ENCODE measurements at regions of chr2 and their contacts with region 1.

Region 1: DNA sequence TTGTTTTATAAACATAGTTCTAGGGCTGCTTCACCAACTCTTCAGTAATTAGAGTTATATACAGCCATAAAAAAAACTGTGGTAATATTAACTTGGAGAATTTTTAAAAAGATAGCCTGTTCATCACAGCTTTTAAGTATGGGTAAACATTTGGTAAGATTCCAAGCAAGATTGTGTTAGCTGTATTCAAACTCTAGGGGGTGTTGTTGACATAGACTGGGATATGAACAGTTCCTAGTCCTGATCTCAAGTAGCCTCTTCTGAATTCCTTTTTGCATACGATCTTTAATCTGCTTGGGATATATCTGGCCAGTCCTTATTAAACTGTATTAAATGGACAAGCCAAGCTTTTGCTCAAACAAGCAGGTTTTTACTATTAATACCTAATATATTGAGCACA is 13.4 kb downstream of the NOP58 start:
- DNase-seq: no peak
- H3K4me3 ChIP-seq: no peak overlapping the region
- H3K27ac ChIP-seq: no peak overlapping the region
- H3K4me1 ChIP-seq: no peaks in the 10 kb centered on the region
- H3K27me3 ChIP-seq: no peaks in the 10 kb centered on the region
- CTCF ChIP-seq: peak in 2 of 3 experiments; percentile 7 to 64; a peak in 2 of 4 replicates
- EP300 ChIP-seq: no peak
- POLR2A ChIP-seq: no peak
- RAD21 ChIP-seq: peak; percentile 44 to 55

Region 2: DNA sequence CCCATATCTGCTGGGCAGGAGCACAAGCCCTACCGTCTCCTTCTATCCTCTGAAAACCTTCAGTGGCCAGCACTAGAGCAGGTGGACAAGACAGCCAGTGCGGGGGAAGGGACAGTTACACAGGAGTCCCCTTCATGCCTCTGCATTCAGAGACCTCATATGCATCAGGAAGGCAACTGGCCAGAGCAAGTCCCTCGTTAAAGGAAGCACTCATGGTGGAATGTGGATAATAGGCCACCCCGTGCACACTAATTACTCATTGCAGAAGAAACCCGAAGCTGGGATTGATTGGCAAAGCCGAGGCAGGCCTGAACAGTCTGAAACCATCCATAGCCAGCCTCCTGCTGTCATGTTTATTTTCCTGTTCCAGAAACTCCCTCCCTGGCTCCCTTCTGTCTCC is 194.7 kb before region 1 on chr2:
- CTCF ChIA-PET with region 1: no interaction called
- POLR2A ChIA-PET with region 1: no interaction called
- DNase-seq: no peak
- H3K4me3 ChIP-seq: no peak overlapping the region; a peak in 1 of 8 replicates
- H3K27ac ChIP-seq: no peak overlapping the region
- H3K4me1 ChIP-seq: peaks cover 5 to 9% (median 7%) of the 10 kb centered on the region in 4 experiments; a peak in 6 of 7 replicates
- H3K27me3 ChIP-seq: no peaks in the 10 kb centered on the region
- CTCF ChIP-seq: no peak
- EP300 ChIP-seq: no peak
- POLR2A ChIP-seq: no peak
- RAD21 ChIP-seq: no peak

Region 3: DNA sequence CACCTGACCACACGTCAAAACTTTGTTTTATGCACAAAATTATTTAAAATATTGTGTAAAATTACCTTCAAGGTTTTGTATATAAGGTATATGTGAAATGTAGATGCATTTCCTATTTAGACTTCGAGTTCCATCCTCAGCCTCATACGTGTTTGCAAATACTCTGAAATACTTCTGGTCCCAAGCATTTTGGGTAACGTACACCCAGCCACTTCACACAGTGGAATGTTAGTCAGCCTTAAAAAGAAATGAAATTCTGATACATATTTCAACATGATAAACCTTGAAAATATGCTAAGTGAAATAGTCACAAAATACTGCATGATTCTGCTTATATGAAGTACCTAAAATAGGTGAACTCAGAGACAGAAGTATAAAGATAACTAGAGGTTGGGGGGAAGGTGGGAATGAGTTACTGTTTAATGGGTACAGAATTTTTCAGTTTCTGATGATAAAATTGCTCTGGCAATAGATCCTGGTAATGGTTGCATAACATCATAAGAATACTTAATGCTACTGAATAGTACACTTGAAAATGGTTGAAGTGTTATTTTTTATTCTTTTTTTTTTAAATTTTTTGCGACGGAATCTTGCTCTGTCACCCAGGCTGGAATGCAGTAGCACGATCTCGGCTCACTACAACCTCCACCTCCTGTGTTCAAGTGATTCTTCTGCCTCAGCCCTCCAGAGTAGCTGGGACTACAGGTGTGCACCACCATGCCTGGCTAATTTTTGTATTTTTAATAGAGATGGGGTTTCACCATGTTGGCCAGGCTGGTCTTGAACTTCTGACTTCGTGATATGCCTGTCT is 10.7 kb after region 1 on chr2:
- CTCF ChIA-PET with region 1: interaction called, 19 read pairs
- POLR2A ChIA-PET with region 1: interaction called, 7 read pairs
- DNase-seq: peak in 1 of 2 experiments; percentile 20
- H3K4me3 ChIP-seq: no peak overlapping the region
- H3K27ac ChIP-seq: no peak overlapping the region
- H3K4me1 ChIP-seq: no peaks in the 10 kb centered on the region
- H3K27me3 ChIP-seq: no peaks in the 10 kb centered on the region
- CTCF ChIP-seq: no peak
- EP300 ChIP-seq: no peak
- POLR2A ChIP-seq: no peak
- RAD21 ChIP-seq: no peak

Region 4: GRCh38 chr2:202299712-202300111 is 20.8 kb after region 1 on chr2:
- CTCF ChIA-PET with region 1: interaction called, 13 read pairs
- POLR2A ChIA-PET with region 1: interaction called, 4 read pairs
- DNase-seq: no peak
- H3K4me3 ChIP-seq: no peak overlapping the region
- H3K27ac ChIP-seq: no peak overlapping the region
- H3K4me1 ChIP-seq: no peaks in the 10 kb centered on the region
- H3K27me3 ChIP-seq: no peaks in the 10 kb centered on the region
- CTCF ChIP-seq: no peak
- EP300 ChIP-seq: no peak
- POLR2A ChIP-seq: no peak
- RAD21 ChIP-seq: no peak

Measured in H1 (cell line).